T-cell (primary cell): ENCODE measurements at regions of chr10 and their contacts with region 1.

Region 1: GRCh38 chr10:46030091-46030937 is at the start of gene NCOA4:
- DNase-seq: peak; percentile 85 to 99 (median 94)
- ATAC-seq: peak; percentile 97 to 98 (median 97)
- H3K4me3 ChIP-seq: peak within 1 kb of the TSS; percentile 75 to 90
- H3K4me3 Mint-ChIP-seq: peak within 1 kb of the TSS; percentile 97 to 98 (median 98)
- H3K27ac ChIP-seq: peak within 1 kb of the TSS; percentile 83
- H3K27ac Mint-ChIP-seq: peak within 1 kb of the TSS; percentile 98
- H3K4me1 ChIP-seq: peaks cover 37 to 39% of the 10 kb centered on the region in 2 experiments
- H3K4me1 Mint-ChIP-seq: peaks cover 50 to 54% (median 53%) of the 10 kb centered on the region in 3 donors
- H3K27me3 ChIP-seq: no peaks in the 10 kb centered on the region
- H3K27me3 Mint-ChIP-seq: no peaks in the 10 kb centered on the region
- total RNA-seq, gene NCOA4: 60.1 to 86.8 (median 75.3) TPM

Region 2: DNA sequence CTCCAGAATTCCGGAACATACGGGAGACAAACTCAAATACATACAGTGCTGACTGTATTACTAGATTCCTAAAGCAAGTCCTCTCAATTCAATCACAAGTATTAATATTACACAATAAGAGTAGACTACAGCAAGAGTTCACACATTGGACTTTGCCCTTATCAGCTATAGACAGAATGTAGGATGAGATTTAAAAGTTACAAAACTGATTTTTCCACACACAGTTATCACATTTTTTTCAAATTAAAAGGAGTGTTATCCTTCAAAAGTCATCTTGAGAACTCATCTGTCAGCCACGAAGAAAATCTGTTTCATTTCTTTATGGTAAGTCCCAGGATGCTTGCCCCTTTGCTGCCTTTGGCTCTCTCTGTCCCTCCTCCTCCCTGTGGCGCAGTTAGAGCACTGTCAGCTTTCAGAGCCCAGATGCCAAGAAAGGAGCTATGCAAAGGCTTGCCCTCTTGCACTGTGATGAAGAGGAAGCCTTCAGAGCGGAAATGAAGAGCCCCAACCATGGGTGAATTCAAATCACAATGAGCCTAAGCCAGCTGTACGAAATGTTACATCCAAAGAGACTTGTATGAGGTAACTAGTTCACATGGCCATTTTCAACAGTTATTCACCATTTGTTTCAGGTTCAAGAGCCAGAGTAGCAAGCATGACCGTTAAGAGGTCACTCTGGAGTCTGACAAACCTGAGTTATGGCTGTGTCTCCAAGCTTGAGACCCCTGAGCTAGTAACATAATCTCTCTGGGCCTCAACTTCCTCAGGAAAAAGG is 10.6 kb before region 1 on chr10:
- CTCF ChIA-PET with region 1: interaction called in 1 of 2 experiments, 11 read pairs
- POLR2A ChIA-PET with region 1: interaction called in 1 of 2 experiments, 3 read pairs
- DNase-seq: peak in 15 of 35 experiments; percentile 3 to 33 (median 11)
- ATAC-seq: peak; percentile 18 to 40 (median 34)
- H3K4me3 ChIP-seq: no peak overlapping the region
- H3K4me3 Mint-ChIP-seq: peak overlapping the region in 2 of 3 donors; percentile 35 to 39
- H3K27ac ChIP-seq: peak overlapping the region; percentile 36
- H3K27ac Mint-ChIP-seq: peak overlapping the region; percentile 43 to 84
- H3K4me1 ChIP-seq: peaks cover 17 to 28% of the 10 kb centered on the region in 2 experiments
- H3K4me1 Mint-ChIP-seq: peaks cover 72 to 82% (median 76%) of the 10 kb centered on the region in 3 donors
- H3K27me3 ChIP-seq: no peaks in the 10 kb centered on the region
- H3K27me3 Mint-ChIP-seq: no peaks in the 10 kb centered on the region